ENCODE measurements at regions of chr9 and their contacts with region 1.

Region 1: DNA sequence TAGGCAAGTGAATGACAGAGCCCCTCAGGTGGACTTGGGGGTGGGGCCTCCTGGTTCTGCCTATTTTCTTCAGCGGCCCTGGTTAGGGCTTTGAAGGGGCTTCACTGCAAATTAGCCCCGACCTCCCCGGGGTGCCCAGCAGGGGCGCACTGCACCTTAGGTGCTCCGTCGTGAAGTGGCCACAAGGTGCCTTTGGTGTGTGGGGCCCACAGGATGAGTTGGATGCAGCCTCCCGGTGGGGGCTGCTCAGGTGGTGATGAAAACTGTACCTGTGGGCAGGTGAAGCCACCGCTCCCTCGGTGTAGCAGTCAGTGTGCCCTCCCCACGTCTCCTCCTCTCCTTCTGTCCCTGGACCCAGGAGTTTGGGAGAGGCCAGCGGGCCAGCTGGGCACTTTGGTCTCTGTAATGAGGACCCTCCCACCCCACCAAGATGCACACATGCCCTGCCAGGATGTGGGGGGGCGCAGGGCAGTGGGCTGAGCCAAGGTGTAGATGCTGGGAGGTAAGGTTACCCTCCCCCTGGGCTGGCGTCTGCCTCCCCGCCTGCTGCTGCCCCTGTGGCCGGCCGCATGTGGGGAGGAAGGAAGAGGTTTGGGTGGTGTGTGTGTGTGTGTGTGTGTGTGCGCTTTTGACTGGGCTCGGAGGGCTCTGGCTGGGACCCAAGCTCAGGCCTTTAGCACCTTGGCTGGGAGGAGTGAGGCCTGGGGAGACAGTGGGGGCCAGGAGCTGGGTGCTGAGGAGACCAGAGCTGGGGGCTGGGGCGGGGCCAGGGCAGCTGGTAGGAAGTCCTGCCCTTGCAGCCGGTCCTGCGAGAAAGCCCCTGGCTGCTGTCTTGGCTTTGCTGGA is 55.6 kb downstream of the RXRA start:
- H3K4me3 Mint-ChIP-seq: peak overlapping the region; percentile 51
- H3K27ac Mint-ChIP-seq: peak overlapping the region; percentile 96
- H3K4me1 Mint-ChIP-seq: peaks cover 100% of the 10 kb centered on the region
- H3K27me3 Mint-ChIP-seq: no peaks in the 10 kb centered on the region

Region 2: GRCh38 chr9:134178768-134179551 is 202.9 kb before region 1 on chr9:
- intact Hi-C with region 1: no loop called
- H3K4me3 Mint-ChIP-seq: no peak overlapping the region
- H3K27ac Mint-ChIP-seq: no peak overlapping the region
- H3K4me1 Mint-ChIP-seq: peaks cover 40% of the 10 kb centered on the region
- H3K27me3 Mint-ChIP-seq: peaks cover 57% of the 10 kb centered on the region

Region 3: GRCh38 chr9:134358662-134359319 is 23.1 kb before region 1 on chr9:
- intact Hi-C with region 1: no loop called
- H3K4me3 Mint-ChIP-seq: peak overlapping the region; percentile 49
- H3K27ac Mint-ChIP-seq: peak overlapping the region; percentile 78
- H3K4me1 Mint-ChIP-seq: peaks cover 100% of the 10 kb centered on the region
- H3K27me3 Mint-ChIP-seq: no peaks in the 10 kb centered on the region

Region 4: DNA sequence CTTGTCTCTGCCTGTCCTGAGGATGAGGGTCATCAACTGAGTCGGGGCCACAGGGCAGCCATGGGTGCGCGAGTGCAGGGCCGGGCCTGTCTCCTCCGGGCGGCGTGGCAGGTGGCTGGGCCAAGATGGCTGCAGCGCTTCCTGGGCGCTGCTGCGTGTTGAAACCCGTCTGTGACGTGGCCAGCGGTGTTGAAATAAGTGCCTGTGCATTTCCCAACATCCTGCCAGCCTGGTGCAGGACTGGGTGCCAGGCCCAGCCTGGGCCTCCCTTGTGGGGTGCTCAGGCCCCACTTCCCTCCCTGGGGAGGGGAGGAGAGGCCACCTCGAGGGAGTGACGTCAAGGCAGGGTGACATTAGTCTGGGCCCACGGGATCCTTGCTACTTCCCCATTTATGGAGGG is 10.2 kb before region 1 on chr9:
- intact Hi-C with region 1: no loop called
- H3K4me3 Mint-ChIP-seq: peak overlapping the region; percentile 77
- H3K27ac Mint-ChIP-seq: peak overlapping the region; percentile 96
- H3K4me1 Mint-ChIP-seq: peaks cover 94% of the 10 kb centered on the region
- H3K27me3 Mint-ChIP-seq: no peaks in the 10 kb centered on the region

Region 5: GRCh38 chr9:134443168-134444037 is 61.5 kb after region 1 on chr9:
- intact Hi-C with region 1: loop called (anchors 5 kb)
- H3K4me3 Mint-ChIP-seq: no peak overlapping the region
- H3K27ac Mint-ChIP-seq: peak overlapping the region; percentile 81
- H3K4me1 Mint-ChIP-seq: peaks cover 57% of the 10 kb centered on the region
- H3K27me3 Mint-ChIP-seq: peaks cover 9% of the 10 kb centered on the region